ENCODE measurements at regions of chr5 and their contacts with region 1.

Region 1: GRCh38 chr5:73625944-73626811 is at the start of gene ARHGEF28:
- DNase-seq: peak; percentile 79
- H3K4me3 Mint-ChIP-seq: peak within 1 kb of the TSS; percentile 72
- H3K27ac Mint-ChIP-seq: peak within 1 kb of the TSS; percentile 46
- H3K4me1 Mint-ChIP-seq: peaks cover 34% of the 10 kb centered on the region
- H3K27me3 Mint-ChIP-seq: no peaks in the 10 kb centered on the region
- CTCF ChIP-seq: no peak
- total RNA-seq, gene ARHGEF28: 27.2 and 34.8 TPM in 2 replicates

Region 2: GRCh38 chr5:73565139-73565968 is 60.8 kb before region 1 on chr5 and contains the starts of genes ANKRA2 and UTP15:
- CTCF ChIA-PET with region 1: no interaction called
- POLR2A ChIA-PET with region 1: interaction called, 13 read pairs
- intact Hi-C with region 1: no loop called
- DNase-seq: peak; percentile 99
- H3K4me3 Mint-ChIP-seq: peak within 1 kb of the TSS; percentile 84
- H3K27ac Mint-ChIP-seq: peak within 1 kb of the TSS; percentile 94
- H3K4me1 Mint-ChIP-seq: peaks cover 11% of the 10 kb centered on the region
- H3K27me3 Mint-ChIP-seq: no peaks in the 10 kb centered on the region
- CTCF ChIP-seq: no peak
- total RNA-seq, gene ANKRA2: 19.3 and 20.2 TPM in 2 replicates
- total RNA-seq, gene UTP15: 41.2 and 41.3 TPM in 2 replicates

Region 3: DNA sequence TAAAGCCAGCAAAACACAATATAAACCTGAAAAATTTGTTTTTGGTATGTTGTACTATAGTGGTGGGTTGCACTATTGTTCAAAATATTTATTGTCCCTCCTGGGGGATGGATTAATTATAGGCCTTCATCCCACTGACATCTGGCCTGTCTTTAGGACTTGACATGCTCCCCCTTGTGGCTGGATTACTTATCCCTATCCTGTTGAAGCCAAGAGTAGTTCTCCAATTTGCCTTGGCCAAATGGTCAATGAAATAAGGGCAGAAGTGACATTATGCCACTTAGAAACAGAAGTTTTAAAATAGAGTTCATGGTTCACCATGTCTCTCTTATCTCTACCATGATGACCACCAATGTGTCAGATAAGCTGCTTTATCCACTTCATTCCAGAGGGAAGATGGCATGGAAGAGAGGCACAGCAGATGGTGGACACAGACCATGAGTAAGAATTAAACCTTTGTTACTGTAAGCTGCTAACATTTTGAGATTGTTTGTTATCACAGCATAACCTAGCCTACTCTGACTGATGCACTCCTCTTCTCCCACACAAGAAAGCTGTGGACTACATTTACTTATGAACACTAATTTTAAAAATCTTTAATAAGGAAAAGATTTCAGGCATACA is 29.4 kb before region 1 on chr5:
- CTCF ChIA-PET with region 1: interaction called, 11 read pairs
- POLR2A ChIA-PET with region 1: interaction called, 5 read pairs
- intact Hi-C with region 1: no loop called
- DNase-seq: peak; percentile 63
- H3K4me3 Mint-ChIP-seq: no peak overlapping the region
- H3K27ac Mint-ChIP-seq: no peak overlapping the region
- H3K4me1 Mint-ChIP-seq: peaks cover 13% of the 10 kb centered on the region
- H3K27me3 Mint-ChIP-seq: no peaks in the 10 kb centered on the region
- CTCF ChIP-seq: peak; percentile 53

Region 4: DNA sequence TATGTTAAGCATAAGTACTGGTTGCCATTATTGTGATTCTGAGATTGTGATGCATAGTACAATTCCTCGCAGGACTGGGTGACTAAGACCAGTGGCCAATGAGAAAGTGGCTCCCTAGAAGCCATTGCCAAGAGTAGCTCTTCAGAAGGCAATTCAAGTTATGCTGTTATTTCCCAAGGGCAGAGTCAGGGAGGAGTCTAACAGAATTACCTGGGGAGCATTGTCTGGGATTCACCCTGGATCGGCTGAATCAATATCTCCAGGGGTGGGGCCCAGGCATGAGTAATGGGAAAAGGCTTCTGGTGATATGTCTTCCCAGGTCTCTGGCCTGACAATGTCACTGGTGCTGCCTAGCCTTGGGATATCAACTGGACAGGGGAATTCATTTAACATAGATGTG is 11.1 kb before region 1 on chr5:
- CTCF ChIA-PET with region 1: interaction called, 5 read pairs
- POLR2A ChIA-PET with region 1: interaction called, 14 read pairs
- intact Hi-C with region 1: no loop called
- DNase-seq: peak; percentile 47
- H3K4me3 Mint-ChIP-seq: no peak overlapping the region
- H3K27ac Mint-ChIP-seq: peak overlapping the region; percentile 8
- H3K4me1 Mint-ChIP-seq: peaks cover 13% of the 10 kb centered on the region
- H3K27me3 Mint-ChIP-seq: no peaks in the 10 kb centered on the region
- CTCF ChIP-seq: no peak

Region 5: GRCh38 chr5:73638344-73639095 is 12.3 kb after region 1 on chr5:
- CTCF ChIA-PET with region 1: interaction called, 4 read pairs
- POLR2A ChIA-PET with region 1: interaction called, 87 read pairs
- intact Hi-C with region 1: no loop called
- DNase-seq: peak; percentile 52
- H3K4me3 Mint-ChIP-seq: peak overlapping the region; percentile 33
- H3K27ac Mint-ChIP-seq: peak overlapping the region; percentile 87
- H3K4me1 Mint-ChIP-seq: peaks cover 45% of the 10 kb centered on the region
- H3K27me3 Mint-ChIP-seq: no peaks in the 10 kb centered on the region
- CTCF ChIP-seq: no peak

Region 6: GRCh38 chr5:73673161-73673591 is 47.0 kb after region 1 on chr5:
- CTCF ChIA-PET with region 1: no interaction called
- POLR2A ChIA-PET with region 1: interaction called, 21 read pairs
- intact Hi-C with region 1: no loop called
- DNase-seq: peak; percentile 70
- H3K4me3 Mint-ChIP-seq: no peak overlapping the region
- H3K27ac Mint-ChIP-seq: peak overlapping the region; percentile 96
- H3K4me1 Mint-ChIP-seq: peaks cover 34% of the 10 kb centered on the region
- H3K27me3 Mint-ChIP-seq: no peaks in the 10 kb centered on the region
- CTCF ChIP-seq: no peak

Region 7: DNA sequence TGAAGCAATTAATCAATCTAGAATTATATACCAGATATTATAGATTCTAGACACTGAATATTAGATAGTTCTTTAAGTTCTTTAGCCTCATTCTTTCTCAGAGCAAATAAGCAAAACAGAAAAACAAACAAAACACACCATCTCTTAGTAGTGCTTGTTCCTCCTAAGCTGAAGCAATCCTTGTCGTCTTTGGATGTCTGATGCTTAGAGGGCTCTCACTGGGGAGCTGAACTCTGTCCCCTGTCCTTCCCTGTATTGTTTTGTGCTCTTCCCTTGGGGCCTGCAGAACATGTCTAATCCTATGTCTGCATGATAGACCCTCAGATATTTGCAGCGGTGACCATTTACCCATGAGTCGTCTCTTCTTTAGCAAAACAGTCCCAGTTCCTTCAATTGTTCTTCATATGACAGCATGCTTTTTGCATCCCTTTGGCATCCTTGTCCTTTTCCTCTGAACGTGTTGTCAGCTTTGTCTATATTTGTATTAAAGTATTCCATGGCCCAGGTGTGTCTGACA is 114.2 kb after region 1 on chr5:
- CTCF ChIA-PET with region 1: no interaction called
- POLR2A ChIA-PET with region 1: no interaction called
- intact Hi-C with region 1: no loop called
- DNase-seq: no peak
- H3K4me3 Mint-ChIP-seq: no peak overlapping the region
- H3K27ac Mint-ChIP-seq: no peak overlapping the region
- H3K4me1 Mint-ChIP-seq: peaks cover 17% of the 10 kb centered on the region
- H3K27me3 Mint-ChIP-seq: no peaks in the 10 kb centered on the region
- CTCF ChIP-seq: no peak

Measured in MCF 10A (cell line).